Endothelial cell of umbilical vein (primary cell): ENCODE measurements at regions of chr19 and their contacts with region 1.

Region 1: GRCh38 chr19:11535792-11536595 is 2.7 kb upstream of the CNN1 start:
- DNase-seq: peak; percentile 81
- H3K4me3 ChIP-seq: peak overlapping the region; percentile 26 to 54 (median 33)
- H3K27ac ChIP-seq: peak overlapping the region; percentile 76
- H3K4me1 ChIP-seq: peaks cover 9% of the 10 kb centered on the region
- H3K27me3 ChIP-seq: peaks cover 5 to 9% of the 10 kb centered on the region in 2 experiments
- CTCF ChIP-seq: peak; percentile 94 to 98
- POLR2A ChIP-seq: peak; percentile 40

Region 2: GRCh38 chr19:11496391-11497163 is 39.4 kb before region 1 on chr19:
- CTCF ChIA-PET with region 1: interaction called, 3 read pairs
- POLR2A ChIA-PET with region 1: no interaction called
- dilution Hi-C with region 1: no loop called
- intact Hi-C with region 1: loop called (anchors 5 kb)
- DNase-seq: peak; percentile 48
- H3K4me3 ChIP-seq: no peak overlapping the region
- H3K27ac ChIP-seq: no peak overlapping the region
- H3K4me1 ChIP-seq: no peaks in the 10 kb centered on the region
- H3K27me3 ChIP-seq: no peaks in the 10 kb centered on the region
- CTCF ChIP-seq: peak; percentile 79 to 82
- POLR2A ChIP-seq: no peak